ENCODE measurements at regions of chr16 and their contacts with region 1.

Region 1: DNA sequence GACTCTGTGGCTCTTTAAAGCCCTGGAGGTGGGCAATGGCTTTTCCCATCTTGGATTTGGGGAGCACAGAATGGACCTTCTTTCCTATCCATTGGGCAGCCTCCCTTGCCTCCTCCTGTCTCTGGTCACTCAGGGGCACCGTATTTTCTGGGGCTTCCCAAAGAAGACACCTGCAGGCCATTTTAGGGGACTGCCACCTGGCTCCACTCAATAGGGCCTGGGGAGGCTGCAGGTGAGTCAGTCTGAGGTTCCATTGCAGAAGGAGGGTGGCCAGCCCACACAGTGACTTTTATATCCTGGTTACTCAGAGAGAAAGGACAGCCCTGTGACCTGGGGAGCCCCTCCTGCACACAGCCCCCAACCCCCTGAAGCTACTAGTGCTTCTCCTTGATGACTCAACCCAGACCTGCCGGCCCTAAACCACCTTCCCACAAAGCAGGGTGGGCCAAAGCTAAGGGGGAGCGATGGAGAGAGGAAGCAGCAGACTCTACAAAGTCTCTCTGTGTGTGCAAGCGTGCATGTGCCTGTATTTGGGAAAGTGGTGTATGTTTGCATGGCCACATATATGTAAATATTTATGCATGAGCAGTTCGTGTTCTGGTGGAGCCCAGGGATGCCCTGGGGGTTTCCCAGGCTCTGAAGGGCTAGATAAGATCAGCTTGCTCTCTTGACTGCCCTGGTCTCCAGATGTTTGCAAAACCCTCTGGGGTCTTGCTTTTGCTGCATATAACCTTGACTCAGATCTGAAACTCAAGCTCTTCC is 5.0 kb downstream of the CX3CL1 start:
- DNase-seq: no peak
- H3K4me3 Mint-ChIP-seq: no peak overlapping the region
- H3K27ac Mint-ChIP-seq: peak overlapping the region; percentile 68
- H3K4me1 Mint-ChIP-seq: peaks cover 19% of the 10 kb centered on the region
- H3K27me3 Mint-ChIP-seq: no peaks in the 10 kb centered on the region

Region 2: DNA sequence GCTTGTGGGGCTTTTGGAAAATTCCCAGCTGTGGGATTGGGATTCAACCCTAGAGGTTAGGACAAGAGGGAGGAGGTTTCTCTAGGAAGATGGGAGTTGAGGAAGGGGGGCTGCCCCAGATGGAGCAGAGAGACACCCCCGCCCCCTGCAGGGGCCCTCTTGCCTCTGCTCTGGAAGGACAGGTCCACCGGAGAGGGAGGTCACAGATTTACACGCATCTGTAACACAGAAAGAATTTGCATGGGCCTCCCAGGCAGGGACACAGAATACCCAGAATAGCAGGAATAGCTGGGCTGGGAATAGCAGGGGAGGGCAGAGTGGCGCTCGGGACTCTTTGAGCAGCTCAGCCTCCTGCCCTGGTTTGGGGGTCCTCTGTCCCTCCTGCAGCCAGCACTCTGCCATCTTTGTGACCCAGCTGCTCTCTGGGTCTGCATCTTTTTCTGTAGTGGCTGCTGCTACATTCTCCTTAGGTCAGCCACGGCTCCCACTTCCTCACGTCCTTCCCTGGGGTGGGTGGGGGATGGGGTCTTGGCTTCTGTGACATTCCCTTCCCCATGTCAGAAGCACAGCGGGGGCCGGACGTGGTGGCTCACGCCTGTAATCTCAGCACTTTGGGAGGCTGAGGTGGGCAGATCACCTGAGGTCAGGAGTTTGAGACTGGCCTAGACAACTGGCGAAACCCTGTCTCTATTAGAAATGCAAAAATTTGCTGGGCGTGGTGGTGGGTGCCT is 58.9 kb before region 1 on chr16:
- intact Hi-C with region 1: no loop called
- DNase-seq: no peak
- H3K4me3 Mint-ChIP-seq: no peak overlapping the region
- H3K27ac Mint-ChIP-seq: no peak overlapping the region
- H3K4me1 Mint-ChIP-seq: peaks cover 13% of the 10 kb centered on the region
- H3K27me3 Mint-ChIP-seq: no peaks in the 10 kb centered on the region

Region 3: DNA sequence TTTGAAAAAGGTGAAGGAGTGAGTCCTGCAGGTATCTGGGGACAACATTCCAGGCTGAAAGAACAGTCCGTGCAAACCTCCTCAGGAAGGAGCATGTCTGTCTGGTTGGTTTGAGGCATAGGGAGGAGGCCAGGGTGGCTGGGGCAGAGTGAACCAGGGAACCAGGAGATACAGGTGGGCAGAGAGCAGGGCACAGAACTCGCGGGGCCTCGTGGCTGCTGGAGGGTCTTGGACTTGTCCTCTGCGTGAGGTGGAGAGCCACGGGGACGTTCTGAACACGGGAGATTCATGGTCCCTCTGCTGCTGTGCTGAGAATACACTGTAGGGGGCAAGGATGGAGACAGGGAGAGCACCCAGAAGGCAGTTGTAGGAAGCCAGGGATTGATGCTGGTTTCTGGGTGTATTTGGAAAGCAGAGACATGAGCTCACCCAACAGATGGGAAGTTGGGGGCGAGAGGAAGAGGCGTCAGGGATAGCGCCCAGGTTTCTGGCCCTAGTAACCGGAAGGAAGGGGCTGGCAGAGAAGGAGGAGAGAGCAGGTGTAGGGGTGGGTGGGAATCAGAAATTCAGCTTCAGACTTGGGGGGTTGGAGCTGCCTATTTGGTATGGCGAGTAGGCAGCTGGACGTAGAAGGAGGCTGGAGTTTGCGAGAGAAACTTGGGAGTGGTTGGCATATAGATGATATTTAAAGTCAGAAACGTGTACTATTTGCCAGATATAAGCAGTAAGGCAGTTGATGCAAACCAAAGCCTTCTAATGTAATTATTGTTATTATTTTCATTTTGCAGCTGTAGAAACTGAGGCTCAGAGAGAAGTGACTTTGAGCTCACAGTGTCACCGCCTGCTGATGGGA is 26.9 kb after region 1 on chr16 and contains the start of gene CCL17:
- intact Hi-C with region 1: no loop called
- DNase-seq: no peak
- H3K4me3 Mint-ChIP-seq: no peak within 1 kb of the TSS
- H3K27ac Mint-ChIP-seq: no peak within 1 kb of the TSS
- H3K4me1 Mint-ChIP-seq: peaks cover 3% of the 10 kb centered on the region
- H3K27me3 Mint-ChIP-seq: peaks cover 3% of the 10 kb centered on the region
- total RNA-seq, gene CCL17: 0.37 and 1.3 TPM in 2 replicates

Region 4: DNA sequence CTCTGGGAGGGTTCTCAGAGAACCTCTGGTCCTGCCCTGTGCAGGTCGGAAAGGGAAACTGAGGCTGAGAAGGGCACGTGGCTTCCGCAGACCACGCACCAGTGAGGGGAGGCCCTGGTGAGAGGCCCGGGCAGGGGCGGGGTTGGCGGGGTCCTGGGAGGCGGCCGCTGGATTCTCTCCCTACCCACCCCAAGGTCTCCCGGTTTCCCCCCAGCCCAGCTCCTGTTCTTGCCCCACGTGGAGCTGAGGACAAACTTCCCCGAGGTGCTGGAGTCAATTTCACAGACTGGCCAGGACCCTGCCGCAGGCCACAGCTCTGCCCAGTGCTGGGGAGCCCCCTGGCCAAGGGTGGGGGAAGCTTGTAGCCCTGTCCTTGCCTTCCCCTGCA is 38.9 kb after region 1 on chr16:
- intact Hi-C with region 1: loop called (anchors 5 kb)
- DNase-seq: no peak
- H3K4me3 Mint-ChIP-seq: no peak overlapping the region
- H3K27ac Mint-ChIP-seq: no peak overlapping the region
- H3K4me1 Mint-ChIP-seq: peaks cover 15% of the 10 kb centered on the region
- H3K27me3 Mint-ChIP-seq: no peaks in the 10 kb centered on the region

Region 5: DNA sequence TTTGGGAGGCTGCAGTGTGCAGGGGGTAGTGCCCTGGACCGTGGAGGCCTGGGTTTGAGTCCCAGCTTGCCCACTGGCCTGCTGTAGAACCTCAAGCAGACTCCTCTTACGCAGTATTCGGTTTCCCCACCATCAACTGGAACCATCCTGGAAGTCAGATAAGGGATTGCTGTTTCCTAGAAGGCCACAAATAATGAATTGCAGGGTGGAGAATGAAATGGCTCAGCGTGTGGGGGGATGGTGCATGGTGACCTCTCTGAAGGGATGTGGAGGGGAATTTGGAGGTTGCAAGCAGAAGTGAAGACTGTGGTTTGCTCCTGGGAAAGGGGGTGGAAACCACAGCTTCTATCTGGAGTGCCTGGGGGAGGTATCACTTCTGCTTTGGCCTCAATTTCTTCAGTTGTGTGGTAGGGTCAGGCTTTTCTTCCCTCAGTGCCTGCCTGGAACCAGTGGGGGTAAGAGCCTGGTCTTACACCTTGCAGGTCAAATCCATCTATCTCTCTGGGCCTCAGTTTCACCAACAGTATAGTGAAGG is 166.9 kb after region 1 on chr16:
- intact Hi-C with region 1: no loop called
- DNase-seq: no peak
- H3K4me3 Mint-ChIP-seq: peak overlapping the region; percentile 9
- H3K27ac Mint-ChIP-seq: no peak overlapping the region
- H3K4me1 Mint-ChIP-seq: peaks cover 45% of the 10 kb centered on the region
- H3K27me3 Mint-ChIP-seq: peaks cover 1% of the 10 kb centered on the region

Measured in activated T-helper 2 cell treated with anti-CD3 and anti-CD28 coated beads, Interferon-gamma antibody, Interleukin-2, Interleukin-4, amounts not matched to agents 10 μg/mL and 5 μg/mL and 100 μg/mL, durations not matched to agents 14 hours and 24 hours and 36 hours (primary cell).